ENCODE measurements at regions of chr5 and their contacts with region 1.

Region 1: DNA sequence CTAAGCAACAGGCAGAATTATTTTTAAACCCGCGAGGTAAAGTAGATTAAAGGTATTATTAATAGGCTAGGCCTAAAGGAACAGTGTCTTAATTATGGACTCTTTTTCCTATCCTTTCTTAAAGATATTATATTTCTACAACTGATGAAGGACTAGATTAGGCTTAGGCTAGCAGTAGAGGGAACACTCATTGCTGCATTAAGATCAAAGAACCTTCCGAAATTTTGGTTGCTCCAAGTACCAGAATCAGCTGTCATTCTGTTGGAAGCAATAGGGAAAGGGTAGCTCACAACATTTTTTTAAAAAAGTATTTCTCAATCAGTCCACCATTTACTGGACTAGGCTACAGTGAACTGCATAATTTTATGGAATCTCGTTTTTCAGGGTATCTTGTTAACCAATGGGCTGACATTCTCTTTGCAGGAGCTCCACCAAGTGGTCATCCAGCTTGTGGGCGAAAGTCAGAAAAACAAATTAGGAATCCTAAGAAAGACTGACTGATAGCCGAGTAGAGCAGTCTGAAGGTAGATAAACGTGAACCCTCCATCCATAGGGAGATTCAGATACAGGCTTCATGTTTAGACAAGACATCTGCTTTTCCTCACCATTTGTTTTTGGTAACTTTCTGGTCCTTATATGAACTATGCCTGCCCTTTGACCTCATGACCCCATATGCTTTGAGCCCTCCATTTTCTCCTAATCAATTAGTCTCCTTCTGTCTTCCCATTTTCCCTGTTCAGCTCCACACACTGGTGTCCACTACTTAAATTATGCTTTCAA is 103.6 kb upstream of the CHD1 start:
- DNase-seq: peak; percentile 84
- H3K4me3 Mint-ChIP-seq: peak overlapping the region; percentile 72
- H3K27ac Mint-ChIP-seq: peak overlapping the region; percentile 24
- H3K4me1 Mint-ChIP-seq: peaks cover 14% of the 10 kb centered on the region
- H3K27me3 Mint-ChIP-seq: no peaks in the 10 kb centered on the region
- CTCF ChIP-seq: peak; percentile 78

Region 2: DNA sequence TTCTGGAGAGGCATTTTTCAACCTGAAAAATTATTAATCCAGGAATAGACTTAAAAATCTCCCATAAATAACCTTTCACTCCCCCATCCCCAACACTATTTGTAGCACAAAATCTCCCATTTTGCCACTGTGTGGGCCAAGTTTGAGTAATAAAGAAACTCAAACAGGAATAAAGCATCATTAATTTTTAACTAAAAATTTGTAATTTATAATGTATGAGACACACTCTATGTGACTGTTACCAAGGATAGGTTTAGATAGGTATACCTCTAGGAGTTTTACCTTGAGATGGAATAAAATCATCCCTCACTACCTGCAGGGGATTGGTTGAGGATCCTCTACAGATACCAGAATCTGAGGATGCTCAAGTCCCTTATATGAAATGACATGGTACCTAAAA is 133.7 kb before region 1 on chr5:
- CTCF ChIA-PET with region 1: interaction called, 43 read pairs
- POLR2A ChIA-PET with region 1: interaction called, 24 read pairs
- intact Hi-C with region 1: no loop called
- DNase-seq: no peak
- H3K4me3 Mint-ChIP-seq: no peak overlapping the region
- H3K27ac Mint-ChIP-seq: no peak overlapping the region
- H3K4me1 Mint-ChIP-seq: no peaks in the 10 kb centered on the region
- H3K27me3 Mint-ChIP-seq: no peaks in the 10 kb centered on the region
- CTCF ChIP-seq: no peak

Region 3: GRCh38 chr5:98911280-98912040 is 121.0 kb before region 1 on chr5:
- CTCF ChIA-PET with region 1: interaction called, 27 read pairs
- POLR2A ChIA-PET with region 1: interaction called, 6 read pairs
- intact Hi-C with region 1: loop called (anchors 1 kb)
- DNase-seq: no peak
- H3K4me3 Mint-ChIP-seq: no peak overlapping the region
- H3K27ac Mint-ChIP-seq: no peak overlapping the region
- H3K4me1 Mint-ChIP-seq: peaks cover 20% of the 10 kb centered on the region
- H3K27me3 Mint-ChIP-seq: no peaks in the 10 kb centered on the region
- CTCF ChIP-seq: no peak

Region 4: GRCh38 chr5:98940581-98940980 is 91.8 kb before region 1 on chr5:
- CTCF ChIA-PET with region 1: interaction called, 7 read pairs
- POLR2A ChIA-PET with region 1: interaction called, 13 read pairs
- intact Hi-C with region 1: no loop called
- DNase-seq: no peak
- H3K4me3 Mint-ChIP-seq: no peak overlapping the region
- H3K27ac Mint-ChIP-seq: peak overlapping the region; percentile 10
- H3K4me1 Mint-ChIP-seq: peaks cover 41% of the 10 kb centered on the region
- H3K27me3 Mint-ChIP-seq: no peaks in the 10 kb centered on the region
- CTCF ChIP-seq: no peak

Region 5: DNA sequence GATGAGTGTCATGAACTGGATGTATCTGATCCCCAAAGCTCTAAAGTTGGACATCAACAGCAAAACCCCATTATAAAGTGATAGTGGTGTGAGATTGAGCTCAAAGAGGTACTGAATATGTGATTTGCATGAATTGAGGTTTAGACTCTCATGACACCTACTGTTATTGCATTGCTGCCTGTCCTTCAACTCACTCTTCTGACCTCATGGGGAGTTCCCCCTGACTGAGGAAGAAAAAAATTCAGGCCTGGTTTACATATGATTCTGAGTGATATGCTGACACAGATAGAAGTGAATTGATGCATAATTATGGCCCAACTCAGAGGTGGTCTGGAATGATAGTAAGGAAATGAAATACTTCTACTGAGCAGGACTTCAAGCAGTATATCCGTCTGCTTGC is 27.5 kb before region 1 on chr5:
- CTCF ChIA-PET with region 1: interaction called, 10 read pairs
- POLR2A ChIA-PET with region 1: no interaction called
- intact Hi-C with region 1: no loop called
- DNase-seq: no peak
- H3K4me3 Mint-ChIP-seq: no peak overlapping the region
- H3K27ac Mint-ChIP-seq: no peak overlapping the region
- H3K4me1 Mint-ChIP-seq: peaks cover 11% of the 10 kb centered on the region
- H3K27me3 Mint-ChIP-seq: no peaks in the 10 kb centered on the region
- CTCF ChIP-seq: no peak

Region 6: DNA sequence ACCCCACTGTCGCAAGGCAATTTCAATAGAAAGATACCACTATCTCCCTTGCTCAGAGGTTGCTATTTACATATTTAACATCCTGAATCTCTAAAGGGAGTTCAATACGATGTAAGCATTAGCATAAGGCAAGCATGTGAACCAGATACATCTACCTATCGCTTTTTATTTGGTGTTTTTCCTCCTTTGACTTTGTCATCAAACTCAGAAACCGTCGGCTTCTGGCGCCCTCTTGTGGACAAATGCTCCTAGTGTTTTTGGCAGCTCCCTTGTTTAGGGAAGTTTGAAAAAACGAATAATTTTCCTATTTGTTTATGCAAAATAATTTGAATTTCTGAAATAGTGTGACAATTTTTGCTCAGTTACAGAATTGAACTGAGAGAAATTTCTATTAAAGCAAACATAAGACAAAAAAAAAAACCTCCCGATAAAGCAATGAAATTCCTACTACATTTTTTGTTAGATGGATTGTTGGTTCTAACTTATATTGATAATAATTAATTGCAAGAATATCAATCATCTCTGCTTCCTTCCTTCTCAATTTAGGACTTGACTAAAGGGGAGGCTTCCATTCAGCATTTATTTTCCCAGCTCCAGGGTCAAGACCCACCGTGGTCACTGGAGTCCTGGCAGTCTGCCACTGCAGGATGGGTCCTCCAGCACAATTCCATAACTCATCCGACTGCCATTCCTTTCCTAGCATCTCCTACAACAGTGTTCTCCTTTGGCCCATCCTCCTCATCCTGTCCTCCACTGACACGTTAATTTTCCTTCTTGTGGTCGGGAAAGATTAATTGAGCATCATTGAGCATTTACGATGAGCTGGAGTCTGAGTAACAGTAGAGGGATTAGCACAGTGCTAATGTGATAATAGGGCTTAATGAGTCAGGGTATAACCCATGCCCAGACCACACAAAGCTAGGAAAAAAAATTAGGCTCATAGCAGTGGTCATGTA is 28.2 kb after region 1 on chr5:
- CTCF ChIA-PET with region 1: interaction called, 17 read pairs
- POLR2A ChIA-PET with region 1: interaction called, 6 read pairs
- intact Hi-C with region 1: loop called (anchors 1 kb)
- DNase-seq: peak; percentile 83
- H3K4me3 Mint-ChIP-seq: no peak overlapping the region
- H3K27ac Mint-ChIP-seq: no peak overlapping the region
- H3K4me1 Mint-ChIP-seq: peaks cover 20% of the 10 kb centered on the region
- H3K27me3 Mint-ChIP-seq: no peaks in the 10 kb centered on the region
- CTCF ChIP-seq: peak; percentile 83

Region 7: DNA sequence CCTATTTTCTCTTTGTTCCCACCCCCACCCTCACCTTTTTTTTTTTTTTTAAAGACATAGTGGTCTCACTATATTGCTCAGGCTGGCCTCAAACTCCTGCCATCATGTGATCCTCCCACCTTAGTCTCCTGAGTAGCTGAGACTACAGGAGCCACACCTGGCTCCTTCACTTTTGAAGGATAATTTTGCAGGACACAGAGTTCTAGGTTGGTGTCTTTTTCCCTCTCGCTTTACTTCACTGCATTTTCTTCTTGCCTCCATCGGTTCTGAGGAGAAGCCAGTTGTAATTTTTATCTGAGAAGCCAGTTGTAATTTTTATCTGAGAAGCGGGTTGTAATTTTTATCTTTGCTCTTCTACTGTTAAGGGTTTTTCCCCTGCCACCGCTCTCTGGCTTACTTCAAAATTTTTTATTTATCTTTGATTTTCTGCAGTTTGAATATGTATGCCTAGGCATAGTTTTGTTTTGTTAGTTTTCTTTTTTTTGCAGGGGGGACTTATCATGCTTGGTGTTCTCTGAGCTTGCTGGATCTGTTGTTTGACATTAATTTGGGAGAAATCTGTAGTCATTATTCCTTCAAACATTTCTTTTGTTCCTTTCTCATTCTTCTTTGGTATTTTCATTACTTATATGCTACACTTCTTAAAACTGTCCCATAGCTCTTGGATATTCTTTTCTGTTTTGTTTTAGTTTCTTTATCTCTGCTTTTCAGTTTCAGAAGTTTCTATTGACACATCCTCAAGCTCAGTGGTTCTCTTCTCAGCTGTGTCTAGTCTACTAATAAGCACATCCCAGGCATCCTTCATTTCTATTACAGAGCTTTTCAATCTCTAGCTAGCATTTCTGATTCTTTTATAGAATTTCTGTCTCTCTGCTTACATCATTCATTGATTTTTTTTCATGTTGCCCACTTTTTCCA is 44.6 kb after region 1 on chr5:
- CTCF ChIA-PET with region 1: no interaction called
- POLR2A ChIA-PET with region 1: no interaction called
- intact Hi-C with region 1: no loop called
- DNase-seq: no peak
- H3K4me3 Mint-ChIP-seq: no peak overlapping the region
- H3K27ac Mint-ChIP-seq: no peak overlapping the region
- H3K4me1 Mint-ChIP-seq: no peaks in the 10 kb centered on the region
- H3K27me3 Mint-ChIP-seq: no peaks in the 10 kb centered on the region
- CTCF ChIP-seq: no peak